Calu3 (cell line): ENCODE measurements at regions of chr7 and their contacts with region 1.

Region 1: GRCh38 chr7:17205910-17206905 is 92.2 kb upstream of the AHR start:
- DNase-seq: peak; percentile 93
- H3K4me3 Mint-ChIP-seq: peak overlapping the region; percentile 13
- H3K27ac Mint-ChIP-seq: peak overlapping the region; percentile 93
- H3K4me1 Mint-ChIP-seq: peaks cover 68% of the 10 kb centered on the region
- H3K27me3 Mint-ChIP-seq: no peaks in the 10 kb centered on the region
- CTCF ChIP-seq: no peak

Region 2: DNA sequence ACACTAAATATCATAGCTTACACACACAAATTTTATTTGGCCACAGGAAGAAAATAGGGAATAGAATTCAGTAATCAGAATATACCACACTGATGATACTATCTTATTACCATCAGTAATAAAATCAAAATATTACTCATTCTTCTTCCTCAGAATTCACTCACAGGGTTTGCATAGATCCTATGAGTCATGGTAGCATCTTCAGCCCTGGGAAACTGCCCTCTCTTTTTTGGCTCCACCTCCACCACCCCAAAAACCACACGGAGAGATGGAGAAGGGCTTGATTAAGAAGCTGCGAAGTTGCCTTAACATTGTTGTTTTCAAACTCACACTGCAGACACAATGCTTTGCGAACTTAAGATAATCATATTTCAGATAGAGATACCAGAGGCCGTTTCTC is 61.9 kb before region 1 on chr7:
- CTCF ChIA-PET with region 1: interaction called, 3 read pairs
- intact Hi-C with region 1: loop called (anchors 2 kb)
- DNase-seq: no peak
- H3K4me3 Mint-ChIP-seq: peak overlapping the region; percentile 36
- H3K27ac Mint-ChIP-seq: peak overlapping the region; percentile 100
- H3K4me1 Mint-ChIP-seq: peaks cover 66% of the 10 kb centered on the region
- H3K27me3 Mint-ChIP-seq: no peaks in the 10 kb centered on the region
- CTCF ChIP-seq: no peak

Region 3: DNA sequence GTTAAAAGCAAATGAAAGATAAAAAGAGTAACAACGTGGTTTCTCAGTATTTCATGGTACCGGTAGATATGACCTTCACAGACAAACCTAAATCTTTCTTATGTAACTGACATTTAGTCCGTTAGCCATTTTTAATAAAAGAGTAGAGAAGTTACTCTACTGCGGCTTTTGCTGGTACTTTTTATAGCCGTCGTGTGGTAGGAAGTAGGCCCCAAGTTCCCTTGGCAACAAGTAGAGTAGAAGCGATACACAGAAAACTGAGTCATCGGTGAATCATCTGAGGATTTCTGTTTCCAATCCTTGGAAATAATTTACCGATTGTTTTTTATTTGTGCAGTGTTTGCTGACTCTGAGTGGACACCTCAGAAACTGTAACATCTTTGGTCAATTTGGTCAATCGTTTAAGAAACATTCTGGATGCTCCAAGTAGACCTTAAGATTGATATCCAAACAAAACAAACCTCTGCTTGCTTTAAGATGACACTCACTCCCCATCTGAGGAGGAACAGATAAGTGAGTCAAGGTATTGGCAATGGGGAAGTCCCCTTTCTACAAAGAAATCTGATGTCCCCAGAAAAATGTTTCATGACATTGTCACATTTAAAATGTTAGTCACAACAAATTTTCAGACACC is 28.3 kb after region 1 on chr7:
- CTCF ChIA-PET with region 1: interaction called, 3 read pairs
- intact Hi-C with region 1: loop called (anchors 2 kb)
- DNase-seq: peak; percentile 76
- H3K4me3 Mint-ChIP-seq: peak overlapping the region; percentile 50
- H3K27ac Mint-ChIP-seq: peak overlapping the region; percentile 96
- H3K4me1 Mint-ChIP-seq: peaks cover 94% of the 10 kb centered on the region
- H3K27me3 Mint-ChIP-seq: peaks cover 12% of the 10 kb centered on the region
- CTCF ChIP-seq: no peak

Region 4: GRCh38 chr7:17247357-17247756 is 41.1 kb after region 1 on chr7:
- CTCF ChIA-PET with region 1: no interaction called
- intact Hi-C with region 1: loop called (anchors 1 kb)
- DNase-seq: no peak
- H3K4me3 Mint-ChIP-seq: no peak overlapping the region
- H3K27ac Mint-ChIP-seq: peak overlapping the region; percentile 48
- H3K4me1 Mint-ChIP-seq: peaks cover 44% of the 10 kb centered on the region
- H3K27me3 Mint-ChIP-seq: no peaks in the 10 kb centered on the region
- CTCF ChIP-seq: no peak

Region 5: GRCh38 chr7:17255926-17256325 is 49.7 kb after region 1 on chr7:
- CTCF ChIA-PET with region 1: no interaction called
- intact Hi-C with region 1: loop called (anchors 1 kb)
- DNase-seq: no peak
- H3K4me3 Mint-ChIP-seq: no peak overlapping the region
- H3K27ac Mint-ChIP-seq: no peak overlapping the region
- H3K4me1 Mint-ChIP-seq: peaks cover 49% of the 10 kb centered on the region
- H3K27me3 Mint-ChIP-seq: no peaks in the 10 kb centered on the region
- CTCF ChIP-seq: no peak

Region 6: GRCh38 chr7:17275749-17276671 is 69.8 kb after region 1 on chr7:
- CTCF ChIA-PET with region 1: interaction called, 4 read pairs
- intact Hi-C with region 1: loop called (anchors 1 kb)
- DNase-seq: no peak
- H3K4me3 Mint-ChIP-seq: peak overlapping the region; percentile 55
- H3K27ac Mint-ChIP-seq: peak overlapping the region; percentile 89
- H3K4me1 Mint-ChIP-seq: peaks cover 56% of the 10 kb centered on the region
- H3K27me3 Mint-ChIP-seq: no peaks in the 10 kb centered on the region
- CTCF ChIP-seq: no peak